Thyroid gland (tissue), 4 donors: ENCODE measurements at regions of chr2 and their contacts with region 1.

Region 1: GRCh38 chr2:152635635-152636298 is 81.5 kb downstream of the PRPF40A start:
- DNase-seq: peak; percentile 48 to 67
- H3K4me3 ChIP-seq: no peak overlapping the region
- H3K27ac ChIP-seq: no peak overlapping the region
- H3K4me1 ChIP-seq: no peaks in the 10 kb centered on the region
- H3K27me3 ChIP-seq: no peaks in the 10 kb centered on the region
- CTCF ChIP-seq: peak; percentile 51 to 84 (median 80)
- POLR2A ChIP-seq: no peak

Region 2: DNA sequence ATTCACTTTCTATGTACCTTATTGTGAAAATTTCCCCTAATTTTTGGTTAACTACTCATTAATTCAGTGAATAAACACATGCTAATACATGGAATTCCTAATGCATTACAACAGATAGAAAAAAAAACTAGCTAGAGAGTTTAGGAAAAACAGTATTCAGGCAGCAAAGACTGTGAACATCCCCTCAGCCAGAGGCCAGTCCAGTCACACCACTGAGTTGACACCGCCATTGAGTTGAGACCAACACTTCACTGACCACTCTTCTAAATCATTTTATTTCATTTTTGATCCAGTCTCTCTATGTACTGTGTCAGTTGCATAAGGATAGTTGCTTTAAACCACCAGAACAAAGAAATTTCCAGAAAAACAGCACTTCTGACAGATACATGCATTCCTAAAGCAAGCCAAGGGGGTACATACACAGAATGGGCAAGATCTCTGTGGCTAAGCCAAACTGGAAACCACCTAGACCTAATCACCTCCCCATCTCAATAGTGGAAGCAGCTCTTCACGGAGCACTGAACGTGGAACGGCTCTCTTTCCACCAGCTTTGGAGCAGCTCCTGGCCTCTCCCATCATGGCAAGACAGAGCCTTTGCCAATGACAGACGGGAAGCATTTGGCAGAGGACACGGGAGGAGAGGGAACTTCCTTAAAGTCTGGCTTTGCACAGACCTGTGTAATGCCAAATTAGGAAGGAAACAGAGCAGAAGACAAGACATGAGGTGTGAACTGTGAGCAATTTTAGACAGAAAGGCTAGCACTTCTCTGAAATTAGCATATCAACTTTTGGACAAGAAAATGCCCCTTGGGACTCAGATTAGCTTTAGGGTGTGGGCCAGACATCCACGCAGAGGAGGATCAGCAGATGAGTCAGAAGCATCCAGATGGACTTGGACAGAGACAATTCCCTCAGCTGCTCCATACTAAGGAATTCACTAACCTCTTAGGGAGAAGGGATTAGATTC is 573.4 kb before region 1 on chr2:
- intact Hi-C with region 1: no loop called
- DNase-seq: peak in 1 of 2 donors; percentile 23
- H3K4me3 ChIP-seq: no peak overlapping the region
- H3K27ac ChIP-seq: peak overlapping the region in 1 of 3 donors; percentile 70
- H3K4me1 ChIP-seq: peaks cover 0 to 6% of the 10 kb centered on the region in 2 donors
- H3K27me3 ChIP-seq: no peaks in the 10 kb centered on the region
- CTCF ChIP-seq: no peak
- POLR2A ChIP-seq: no peak

Region 3: GRCh38 chr2:152189622-152190495 is 445.9 kb before region 1 on chr2:
- intact Hi-C with region 1: loop called (anchors 5 kb)
- DNase-seq: peak; percentile 38 to 50
- H3K4me3 ChIP-seq: no peak overlapping the region
- H3K27ac ChIP-seq: no peak overlapping the region
- H3K4me1 ChIP-seq: no peaks in the 10 kb centered on the region
- H3K27me3 ChIP-seq: no peaks in the 10 kb centered on the region
- CTCF ChIP-seq: peak; percentile 52 to 91 (median 82)
- POLR2A ChIP-seq: no peak

Region 4: DNA sequence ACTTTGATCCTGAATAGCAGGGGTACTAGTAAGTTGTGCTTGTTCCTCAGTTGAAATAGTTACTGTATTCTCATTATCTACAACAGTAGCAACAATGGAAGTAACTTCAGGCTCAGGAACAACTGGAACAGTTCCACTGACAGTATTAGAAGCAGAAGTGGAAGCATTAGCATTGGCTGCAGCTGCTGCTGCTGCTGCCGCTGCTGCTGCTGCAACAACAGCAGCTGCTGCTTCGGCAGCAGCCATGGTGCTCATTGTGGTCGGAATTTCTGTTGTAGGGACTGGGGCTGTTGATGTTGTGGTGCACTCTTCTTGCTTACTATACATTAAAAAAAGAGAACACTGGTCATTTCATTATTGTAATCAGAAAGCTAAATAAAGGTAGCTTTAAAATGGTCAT is 40.7 kb after region 1 on chr2:
- intact Hi-C with region 1: no loop called
- DNase-seq: no peak
- H3K4me3 ChIP-seq: no peak overlapping the region
- H3K27ac ChIP-seq: no peak overlapping the region
- H3K4me1 ChIP-seq: no peaks in the 10 kb centered on the region
- H3K27me3 ChIP-seq: no peaks in the 10 kb centered on the region
- CTCF ChIP-seq: no peak
- POLR2A ChIP-seq: no peak